HEK293T (cell line): ENCODE measurements at regions of chr17 and their contacts with region 1.

Region 1: GRCh38 chr17:50094753-50095619 is at the start of gene PDK2:
- DNase-seq: peak; percentile 97

Region 2: DNA sequence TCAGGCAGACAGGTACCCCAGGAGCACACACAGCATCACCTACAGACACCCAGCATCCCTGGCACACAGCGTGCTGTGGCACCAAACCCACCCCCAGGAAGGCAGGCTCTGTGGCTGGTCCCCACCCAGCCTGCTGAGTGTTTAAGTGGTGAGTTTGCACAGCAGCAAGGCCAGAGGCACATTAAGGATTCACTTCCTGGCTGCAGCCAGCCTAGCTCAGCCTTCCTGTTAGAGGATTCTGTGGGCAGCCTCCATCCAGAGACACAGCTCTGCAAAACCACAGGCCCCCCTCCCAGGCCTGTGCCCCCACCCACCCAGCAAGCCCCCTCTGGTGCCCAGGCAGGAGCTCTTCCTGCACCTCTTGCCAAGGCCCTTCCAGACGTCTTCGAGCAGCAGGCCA is 644.3 kb before region 1 on chr17:
- CTCF ChIA-PET with region 1: no interaction called
- POLR2A ChIA-PET with region 1: no interaction called
- DNase-seq: no peak

Region 3: DNA sequence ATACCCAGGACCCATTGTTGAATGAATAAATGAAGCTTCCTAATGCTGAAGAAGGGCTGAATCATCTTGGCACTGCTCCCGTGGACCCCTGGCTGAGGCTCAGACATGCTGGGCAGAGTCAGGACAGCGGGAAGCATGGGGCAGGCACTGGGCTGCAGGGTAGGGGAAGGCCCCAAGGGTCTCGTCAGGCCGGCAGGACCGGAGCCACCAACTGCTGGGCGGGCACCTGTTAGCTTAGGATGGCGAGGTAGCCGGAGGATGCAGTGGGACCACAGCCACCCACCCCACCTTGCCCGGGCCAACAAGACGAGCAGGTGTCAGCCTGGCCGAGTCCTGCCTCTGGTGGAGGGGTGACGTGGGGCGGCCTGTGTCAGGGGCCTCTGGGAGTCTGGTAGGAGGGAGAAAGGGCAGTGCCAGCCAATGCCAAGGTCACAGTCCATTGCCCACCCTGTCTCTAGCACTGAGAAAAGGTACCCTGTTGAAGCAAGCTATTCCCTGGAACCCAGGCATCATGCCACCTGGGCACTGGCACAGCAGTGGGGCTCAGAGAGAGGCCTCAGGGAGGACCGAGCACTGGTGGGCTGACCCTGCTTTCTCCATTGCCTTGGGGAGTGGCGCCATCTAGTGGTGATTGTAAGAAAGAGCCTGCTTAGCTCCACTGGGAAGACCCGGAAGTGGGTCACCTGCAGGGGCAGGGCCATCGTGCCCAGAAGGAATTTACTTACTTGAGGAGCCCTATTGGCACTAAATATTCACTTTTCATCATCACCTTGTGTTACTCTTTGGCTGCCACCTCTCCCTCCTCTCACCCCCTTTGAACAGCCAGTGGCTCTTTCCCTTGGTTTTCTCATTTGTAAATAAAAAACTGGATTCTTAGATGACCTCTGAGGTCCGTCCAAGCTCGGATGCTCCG is 96.9 kb before region 1 on chr17:
- CTCF ChIA-PET with region 1: interaction called, 25 read pairs
- POLR2A ChIA-PET with region 1: no interaction called
- DNase-seq: peak; percentile 91

Region 4: GRCh38 chr17:50037321-50038071 is 57.5 kb before region 1 on chr17:
- CTCF ChIA-PET with region 1: interaction called, 13 read pairs
- POLR2A ChIA-PET with region 1: no interaction called
- DNase-seq: no peak

Region 5: GRCh38 chr17:50081757-50082156 is 13.2 kb before region 1 on chr17:
- CTCF ChIA-PET with region 1: interaction called, 10 read pairs
- POLR2A ChIA-PET with region 1: no interaction called
- DNase-seq: no peak

Region 6: DNA sequence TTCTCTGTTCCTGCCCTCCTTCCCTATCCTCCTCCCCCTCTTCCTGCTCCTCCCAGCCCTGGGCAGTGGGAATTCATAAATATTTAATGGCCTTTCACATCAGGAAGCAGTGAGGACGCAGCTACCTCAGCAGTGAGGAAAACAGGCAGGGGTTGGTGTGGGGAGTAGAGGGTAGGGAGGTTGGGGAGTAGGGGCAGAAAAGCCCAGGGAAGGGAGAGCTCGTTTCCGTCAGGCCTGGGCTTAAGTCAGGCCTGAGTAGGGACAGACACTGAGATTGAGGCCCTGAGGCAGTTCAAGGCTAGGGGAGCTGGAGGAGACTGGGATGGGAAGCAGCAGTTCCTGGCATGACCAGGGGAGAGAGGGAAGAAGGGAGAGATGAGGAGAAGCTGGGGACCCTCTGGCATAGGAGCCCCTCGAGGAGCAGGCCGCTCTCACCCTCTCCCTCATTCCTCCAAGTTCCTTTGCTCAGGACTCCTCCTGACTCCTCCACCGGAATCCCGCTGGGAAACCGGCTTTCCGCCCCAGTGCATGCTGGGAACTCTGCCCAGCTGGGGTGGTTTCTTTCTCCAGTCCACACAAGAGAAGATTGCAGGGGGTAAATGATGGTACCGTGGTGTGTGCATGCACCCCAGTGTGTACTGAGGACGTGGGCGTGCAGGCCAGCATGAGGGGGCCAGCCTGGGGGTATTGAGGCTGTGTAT is 28.8 kb after region 1 on chr17:
- CTCF ChIA-PET with region 1: interaction called, 10 read pairs
- POLR2A ChIA-PET with region 1: interaction called, 12 read pairs
- DNase-seq: peak; percentile 69

Region 7: DNA sequence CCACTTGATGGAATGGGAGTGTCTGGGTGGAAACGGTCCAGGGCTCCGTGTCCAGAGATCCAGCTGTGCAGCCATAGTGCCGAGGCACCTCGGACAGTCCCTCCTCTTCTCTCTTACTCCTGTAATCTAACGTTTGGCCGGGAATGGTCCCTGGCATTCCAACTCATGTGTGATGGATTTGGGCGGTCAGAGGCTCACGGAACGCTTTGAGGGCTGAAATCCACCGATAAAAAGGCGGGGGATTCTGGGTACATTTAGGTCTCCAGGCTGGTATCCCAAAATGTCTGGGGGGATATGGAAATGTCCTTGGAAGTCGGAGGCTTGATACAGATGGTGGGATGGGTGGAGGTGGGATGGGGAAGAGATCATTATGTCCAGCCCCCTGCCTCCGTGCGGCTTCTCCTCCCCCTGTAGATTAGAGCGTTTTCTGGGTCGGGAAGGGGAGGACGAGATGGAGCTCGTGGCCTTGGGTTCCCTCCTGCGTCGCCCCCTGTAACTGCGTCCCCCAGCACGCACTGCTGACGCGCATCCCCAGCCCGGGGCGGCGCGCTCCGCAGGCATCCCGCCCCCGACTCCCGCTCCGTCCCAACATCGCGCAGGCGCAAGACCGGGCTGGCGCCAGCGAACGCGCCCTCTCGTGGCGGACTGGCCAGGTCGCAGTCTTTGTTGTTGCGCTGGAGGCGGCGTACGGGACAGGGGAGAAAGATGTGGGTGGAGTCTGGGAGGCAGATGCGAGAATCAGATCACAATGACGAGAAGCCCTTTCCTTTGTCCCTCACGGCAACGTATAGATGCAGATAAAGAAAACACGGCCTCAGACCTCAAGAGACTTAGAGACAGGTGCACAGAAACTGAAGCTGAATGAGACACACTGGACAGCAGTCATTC is 66.3 kb after region 1 on chr17:
- CTCF ChIA-PET with region 1: interaction called, 18 read pairs
- POLR2A ChIA-PET with region 1: interaction called, 18 read pairs
- DNase-seq: peak; percentile 99

Region 8: GRCh38 chr17:50186661-50187393 is 91.8 kb after region 1 on chr17:
- CTCF ChIA-PET with region 1: no interaction called
- POLR2A ChIA-PET with region 1: no interaction called
- DNase-seq: no peak

Region 9: GRCh38 chr17:50213026-50214022 is 118.3 kb after region 1 on chr17:
- CTCF ChIA-PET with region 1: no interaction called
- POLR2A ChIA-PET with region 1: no interaction called
- DNase-seq: peak; percentile 39